GM10248 (cell line): ENCODE measurements at regions of chr6 and their contacts with region 1.

Region 1: DNA sequence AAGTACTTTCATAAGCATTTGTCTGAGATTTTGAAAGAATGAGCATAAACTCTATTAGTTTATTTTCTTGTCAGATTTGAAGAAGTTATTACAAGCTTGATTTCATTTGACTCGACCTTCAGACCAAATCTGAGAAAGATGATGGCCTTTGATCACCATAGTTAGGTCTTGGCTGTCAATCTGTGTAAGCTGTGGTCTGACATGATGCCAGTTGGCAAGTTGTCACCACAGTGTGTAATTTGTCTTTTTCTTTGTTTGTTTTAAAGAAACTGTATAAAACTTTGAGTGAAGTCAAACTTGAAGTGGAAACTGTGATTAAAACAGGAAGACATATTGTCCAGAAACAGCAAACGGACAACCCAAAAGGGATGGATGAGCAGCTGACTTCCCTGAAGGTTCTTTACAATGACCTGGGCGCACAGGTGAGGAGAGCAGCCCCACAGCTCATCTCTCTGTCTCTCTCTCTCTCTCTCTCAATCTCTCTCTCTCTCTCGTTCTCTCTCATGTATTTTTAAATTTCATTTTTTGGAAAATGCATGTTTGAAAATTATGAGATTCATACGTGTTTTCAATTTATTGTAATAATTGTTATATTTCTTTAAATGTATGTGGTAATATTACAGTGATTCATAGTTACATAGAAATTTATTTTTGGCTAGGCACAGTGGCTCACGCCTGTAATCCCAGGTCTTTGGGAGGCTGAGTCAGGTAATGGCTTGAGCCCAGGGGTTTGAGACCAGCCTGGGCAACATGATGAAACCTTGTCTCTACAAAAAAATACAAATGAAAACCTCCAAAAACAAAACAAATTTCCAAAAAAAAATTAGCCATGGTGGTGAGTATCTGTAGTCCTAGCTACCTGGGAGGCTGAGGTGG is 208.1 kb downstream of the UTRN start:
- DNase-seq: no peak
- CTCF ChIP-seq: no peak

Region 2: GRCh38 chr6:144478483-144478882 is 14.8 kb before region 1 on chr6:
- CTCF ChIA-PET with region 1: interaction called, 13 read pairs
- POLR2A ChIA-PET with region 1: no interaction called
- DNase-seq: no peak
- CTCF ChIP-seq: no peak